PC-9 (cell line): ENCODE measurements at regions of chr2 and their contacts with region 1.

Region 1: GRCh38 chr2:19538405-19538963 is 180.1 kb upstream of the OSR1 start:
- DNase-seq: peak; percentile 77 to 98
- H3K4me3 ChIP-seq: peak overlapping the region; percentile 41; the same call in 1 of the 2 replicates
- H3K27ac ChIP-seq: peak overlapping the region; percentile 97
- H3K4me1 ChIP-seq: peaks cover 70% of the 10 kb centered on the region
- H3K27me3 ChIP-seq: no peaks in the 10 kb centered on the region
- CTCF ChIP-seq: no peak

Region 2: GRCh38 chr2:19568809-19569791 is 30.6 kb after region 1 on chr2:
- CTCF ChIA-PET with region 1: no interaction called
- POLR2A ChIA-PET with region 1: no interaction called
- intact Hi-C with region 1: loop called (anchors 1 kb)
- DNase-seq: peak; percentile 17 to 82
- H3K4me3 ChIP-seq: no peak overlapping the region
- H3K27ac ChIP-seq: peak overlapping the region; percentile 53
- H3K4me1 ChIP-seq: peaks cover 19% of the 10 kb centered on the region
- H3K27me3 ChIP-seq: no peaks in the 10 kb centered on the region
- CTCF ChIP-seq: no peak

Region 3: DNA sequence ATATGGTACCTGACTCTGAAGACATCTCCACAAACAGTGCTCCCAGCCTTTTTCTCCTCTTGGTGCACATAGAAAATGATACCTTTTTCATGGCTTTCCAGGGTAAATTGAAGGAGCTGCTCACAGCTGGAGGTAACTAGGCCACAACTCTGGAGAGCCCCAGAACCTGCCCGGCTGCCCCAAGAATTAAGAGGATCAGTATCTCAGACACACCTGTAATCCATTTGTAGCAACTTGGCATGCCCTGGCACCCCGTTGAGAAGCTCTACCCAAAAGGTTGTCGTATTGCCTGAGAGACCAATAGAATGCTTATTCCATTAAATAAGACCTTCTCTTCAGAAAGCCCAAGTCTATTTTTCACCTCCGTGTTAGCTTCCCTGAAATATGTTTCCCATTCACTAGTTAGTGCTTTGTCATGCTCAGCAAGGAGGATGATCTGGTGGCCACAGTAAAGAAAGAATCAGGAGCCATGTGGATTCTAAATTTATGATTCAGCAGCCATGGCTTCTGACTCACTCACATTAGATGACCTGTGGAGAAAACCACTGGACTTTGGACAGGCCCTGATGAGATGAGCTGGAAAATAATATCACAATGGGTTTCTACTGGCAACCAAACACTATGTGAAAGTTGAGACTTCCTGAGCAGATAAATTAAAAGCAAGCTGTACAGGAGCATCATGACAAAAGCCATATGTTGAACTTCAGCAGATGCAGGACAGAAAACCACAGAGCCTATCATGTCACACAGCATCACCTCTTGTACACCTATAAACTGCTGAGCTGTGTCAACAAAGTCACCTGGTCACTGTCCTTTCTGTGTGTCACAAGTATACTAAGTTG is 73.2 kb after region 1 on chr2:
- CTCF ChIA-PET with region 1: no interaction called
- POLR2A ChIA-PET with region 1: no interaction called
- intact Hi-C with region 1: loop called (anchors 1 kb)
- DNase-seq: peak; percentile 58 to 98
- H3K4me3 ChIP-seq: peak overlapping the region; percentile 9; the same call in 1 of the 2 replicates
- H3K27ac ChIP-seq: peak overlapping the region; percentile 98
- H3K4me1 ChIP-seq: peaks cover 85% of the 10 kb centered on the region
- H3K27me3 ChIP-seq: no peaks in the 10 kb centered on the region
- CTCF ChIP-seq: no peak

Region 4: GRCh38 chr2:19617257-19617848 is 78.9 kb after region 1 on chr2:
- CTCF ChIA-PET with region 1: no interaction called
- POLR2A ChIA-PET with region 1: no interaction called
- intact Hi-C with region 1: loop called (anchors 1 kb)
- DNase-seq: peak; percentile 87 to 99
- H3K4me3 ChIP-seq: no peak overlapping the region; the same call in 1 of the 2 replicates
- H3K27ac ChIP-seq: peak overlapping the region; percentile 98
- H3K4me1 ChIP-seq: peaks cover 46% of the 10 kb centered on the region
- H3K27me3 ChIP-seq: no peaks in the 10 kb centered on the region
- CTCF ChIP-seq: no peak

Region 5: GRCh38 chr2:19667085-19667484 is 128.6 kb after region 1 on chr2:
- CTCF ChIA-PET with region 1: no interaction called
- POLR2A ChIA-PET with region 1: no interaction called
- intact Hi-C with region 1: loop called (anchors 1 kb)
- DNase-seq: no peak
- H3K4me3 ChIP-seq: no peak overlapping the region
- H3K27ac ChIP-seq: 0 out of 2 replicates have a peak overlapping the region, but pooled peaks have one; percentile 8
- H3K4me1 ChIP-seq: peaks cover 10% of the 10 kb centered on the region
- H3K27me3 ChIP-seq: no peaks in the 10 kb centered on the region
- CTCF ChIP-seq: peak; percentile 63; the same call in 1 of the 2 replicates

Region 6: DNA sequence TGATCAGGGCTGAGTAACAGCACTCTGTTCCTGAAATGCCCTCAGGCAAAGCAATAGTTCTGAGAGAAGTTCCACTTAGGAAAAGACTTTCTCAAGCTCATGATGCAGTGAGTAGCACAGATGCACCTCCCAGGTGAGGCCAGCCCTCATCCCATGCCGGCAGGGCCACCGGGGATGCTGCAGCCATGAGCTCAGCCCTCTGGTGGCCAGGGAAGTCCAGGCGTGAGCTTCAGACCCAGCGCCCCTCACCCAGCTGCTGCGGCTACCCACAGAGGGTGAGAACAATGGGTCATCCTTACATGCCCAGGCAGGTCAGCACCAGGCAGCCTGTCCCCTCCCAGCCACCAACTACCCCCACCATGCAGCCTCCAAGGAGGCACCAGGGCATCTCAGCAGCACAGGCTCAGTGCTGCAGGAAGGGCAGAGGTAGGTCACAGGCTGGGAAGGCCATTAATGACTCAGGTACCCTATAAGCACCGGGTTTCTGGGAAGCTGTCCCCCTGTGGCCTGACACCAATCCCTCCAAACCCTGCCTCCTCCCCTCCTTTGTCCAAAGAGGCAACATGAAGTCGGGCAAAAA is 312.7 kb after region 1 on chr2:
- CTCF ChIA-PET with region 1: no interaction called
- POLR2A ChIA-PET with region 1: no interaction called
- intact Hi-C with region 1: loop called (anchors 10 kb)
- DNase-seq: peak in 1 of 2 experiments; percentile 37
- H3K4me3 ChIP-seq: no peak overlapping the region
- H3K27ac ChIP-seq: no peak overlapping the region
- H3K4me1 ChIP-seq: peaks cover 2% of the 10 kb centered on the region; the same call in 1 of the 2 replicates
- H3K27me3 ChIP-seq: no peaks in the 10 kb centered on the region
- CTCF ChIP-seq: peak; percentile 40; the same call in 1 of the 2 replicates